SK-N-SH (cell line): ENCODE measurements at regions of chr2 and their contacts with region 1.

Region 1: DNA sequence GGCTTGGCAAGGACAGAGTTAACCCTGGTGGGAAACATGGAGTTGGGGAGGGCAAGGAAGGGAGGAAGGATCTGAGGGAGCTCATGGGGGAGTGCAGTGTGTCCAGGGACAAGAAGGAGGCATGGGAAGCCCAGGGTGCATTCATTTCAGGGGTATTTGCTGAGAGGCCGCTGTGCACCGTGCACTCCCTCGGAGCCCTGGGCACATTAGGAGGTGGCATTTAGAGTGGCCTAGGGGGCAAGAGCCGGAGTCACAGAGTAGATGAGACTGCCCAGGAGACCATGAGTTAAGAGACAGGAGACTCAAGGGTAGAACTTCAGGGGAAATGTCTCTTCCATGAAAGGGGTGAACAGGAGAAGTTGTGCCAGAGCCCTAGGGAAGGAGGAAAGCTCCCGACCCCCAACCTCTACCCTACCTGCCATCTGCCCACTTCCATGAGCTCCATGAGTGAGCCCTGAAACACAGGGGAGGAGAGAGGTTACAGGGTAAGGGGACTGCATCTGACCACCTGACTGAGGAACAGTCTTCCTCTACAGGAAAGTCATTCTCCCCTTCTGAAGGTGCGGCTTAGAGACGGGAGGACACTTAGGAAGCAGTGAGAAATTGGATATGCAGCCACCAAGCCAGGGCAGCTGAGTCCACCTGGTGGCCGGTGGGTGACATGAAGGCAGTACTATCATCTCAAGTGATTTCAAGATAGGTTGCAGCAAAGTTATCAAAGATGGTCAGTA is 58.5 kb upstream of the COPS8 start:
- DNase-seq: peak; percentile 60
- H3K4me3 ChIP-seq: no peak overlapping the region; a peak in 1 of 4 replicates
- H3K27ac ChIP-seq: no peak overlapping the region
- H3K4me1 ChIP-seq: no peaks in the 10 kb centered on the region
- H3K27me3 ChIP-seq: no peaks in the 10 kb centered on the region
- CTCF ChIP-seq: peak; percentile 68
- EP300 ChIP-seq: no peak
- RAD21 ChIP-seq: peak; percentile 83

Region 2: DNA sequence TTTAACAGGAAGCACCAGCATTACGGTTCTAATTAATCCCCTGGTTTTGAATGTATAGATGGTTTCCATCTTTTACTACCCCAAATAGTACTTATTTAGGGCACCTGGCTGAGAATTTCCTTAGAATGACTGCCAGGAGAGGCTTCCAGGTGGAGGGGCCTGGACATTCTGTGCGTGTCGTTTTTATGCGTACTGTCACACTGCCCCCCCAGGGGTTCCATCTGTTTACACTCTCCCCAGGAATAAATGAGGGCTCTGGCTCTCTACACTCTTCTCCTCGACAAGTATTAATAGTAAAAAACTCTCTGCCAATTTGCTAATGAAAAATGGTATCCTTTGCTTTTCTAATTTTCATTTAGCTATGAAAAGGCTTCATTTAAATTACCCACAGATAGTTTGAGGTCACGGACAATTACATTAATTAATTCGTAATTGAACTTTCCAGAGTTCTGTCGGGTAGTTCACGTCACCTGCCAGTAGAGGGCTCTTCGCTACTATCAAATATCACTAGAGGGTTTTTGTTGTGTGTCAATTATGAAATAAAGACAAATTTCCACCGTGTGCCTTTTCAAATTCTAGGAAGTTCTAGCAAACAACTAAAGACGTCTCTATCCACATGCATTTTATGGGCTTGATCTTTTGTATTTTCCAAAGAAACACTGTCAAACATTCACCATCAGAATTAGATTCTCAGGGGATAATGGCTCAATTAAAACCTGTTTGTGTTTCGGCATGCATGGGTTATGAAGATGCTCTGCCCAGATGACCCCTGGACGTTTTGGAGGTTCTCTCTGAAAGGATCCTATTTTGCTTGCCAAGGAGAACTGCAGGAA is 674.2 kb before region 1 on chr2:
- CTCF ChIA-PET with region 1: interaction called, 14 read pairs
- POLR2A ChIA-PET with region 1: no interaction called
- DNase-seq: peak; percentile 58
- H3K4me3 ChIP-seq: peak overlapping the region in 1 of 2 experiments; percentile 14; a peak in 1 of 4 replicates
- H3K27ac ChIP-seq: no peak overlapping the region
- H3K4me1 ChIP-seq: no peaks in the 10 kb centered on the region
- H3K27me3 ChIP-seq: no peaks in the 10 kb centered on the region
- CTCF ChIP-seq: peak; percentile 95
- EP300 ChIP-seq: no peak
- RAD21 ChIP-seq: peak; percentile 78

Region 3: DNA sequence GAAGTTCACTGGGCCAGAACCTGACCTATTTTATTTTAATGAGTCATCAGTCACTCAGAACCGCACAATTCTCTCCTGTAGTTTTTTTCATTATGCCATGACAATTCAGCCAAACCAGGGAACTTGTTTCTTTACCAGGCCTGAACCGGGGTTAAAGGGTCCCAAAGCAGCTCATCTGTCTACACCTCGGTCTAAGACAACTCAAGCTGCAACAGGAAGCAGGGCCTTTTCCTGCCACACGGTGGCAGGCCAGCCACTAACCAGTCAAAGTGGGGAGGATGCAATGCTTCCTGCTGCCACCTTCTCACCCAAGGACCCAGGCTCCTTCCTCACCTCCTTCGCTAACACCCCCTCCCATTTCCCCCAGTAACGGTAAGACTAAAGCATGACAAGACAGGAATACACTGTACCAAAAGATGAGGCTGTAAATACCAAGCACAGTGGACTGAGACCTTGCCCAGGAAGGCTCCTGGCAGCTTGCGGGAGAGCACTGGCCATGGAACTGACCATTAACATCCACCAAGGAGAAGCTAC is 514.2 kb before region 1 on chr2:
- CTCF ChIA-PET with region 1: interaction called, 65 read pairs
- POLR2A ChIA-PET with region 1: no interaction called
- DNase-seq: peak; percentile 72
- H3K4me3 ChIP-seq: no peak overlapping the region; a peak in 1 of 4 replicates
- H3K27ac ChIP-seq: no peak overlapping the region
- H3K4me1 ChIP-seq: no peaks in the 10 kb centered on the region
- H3K27me3 ChIP-seq: no peaks in the 10 kb centered on the region; the same call in 1 of the 2 replicates
- CTCF ChIP-seq: peak; percentile 61
- EP300 ChIP-seq: no peak
- RAD21 ChIP-seq: peak; percentile 66

Region 4: DNA sequence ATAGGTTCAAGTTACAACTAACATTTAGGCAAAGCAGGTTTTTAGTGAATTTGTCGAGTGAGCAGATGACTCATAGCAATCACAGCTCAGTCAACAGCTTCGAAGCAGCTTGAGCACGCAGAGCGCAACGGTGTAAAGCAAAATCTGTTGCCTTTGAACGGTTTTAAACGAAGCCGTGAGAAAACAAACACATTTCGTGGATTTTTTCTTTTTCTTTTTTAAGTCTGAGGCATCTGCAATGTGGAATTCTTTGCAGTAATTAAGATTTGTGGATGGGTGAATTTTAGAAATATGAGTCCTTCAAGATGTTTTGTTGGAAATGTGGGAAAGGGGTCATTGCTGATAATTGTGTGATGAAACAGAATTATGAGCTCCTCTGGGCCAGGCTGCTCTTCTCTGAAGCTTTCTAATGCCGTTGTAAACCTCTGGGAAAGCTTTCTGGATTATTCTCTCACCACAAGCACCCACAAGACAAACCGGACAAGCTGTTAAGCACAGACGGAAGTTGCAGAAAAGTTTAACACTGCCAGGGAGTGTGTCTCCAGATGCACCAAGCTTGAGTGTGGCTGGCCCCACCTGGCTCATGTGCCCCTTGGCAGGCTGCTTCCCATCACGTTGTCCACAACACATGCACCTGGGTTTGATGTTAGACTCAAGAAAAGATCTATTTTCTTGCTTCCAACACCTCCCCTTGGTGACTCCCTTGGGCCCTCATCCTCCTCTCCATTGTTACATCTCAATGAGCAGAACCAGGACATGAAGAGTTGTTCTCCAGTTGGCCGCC is 232.8 kb before region 1 on chr2:
- CTCF ChIA-PET with region 1: no interaction called
- POLR2A ChIA-PET with region 1: no interaction called
- DNase-seq: no peak
- H3K4me3 ChIP-seq: no peak overlapping the region
- H3K27ac ChIP-seq: no peak overlapping the region
- H3K4me1 ChIP-seq: no peaks in the 10 kb centered on the region
- H3K27me3 ChIP-seq: peaks cover 19% of the 10 kb centered on the region; the same call in 1 of the 2 replicates
- CTCF ChIP-seq: no peak
- EP300 ChIP-seq: no peak
- RAD21 ChIP-seq: no peak

Region 5: GRCh38 chr2:237012577-237013267 is 14.4 kb before region 1 on chr2:
- CTCF ChIA-PET with region 1: interaction called, 10 read pairs
- POLR2A ChIA-PET with region 1: no interaction called
- DNase-seq: no peak
- H3K4me3 ChIP-seq: no peak overlapping the region
- H3K27ac ChIP-seq: no peak overlapping the region
- H3K4me1 ChIP-seq: no peaks in the 10 kb centered on the region
- H3K27me3 ChIP-seq: no peaks in the 10 kb centered on the region
- CTCF ChIP-seq: no peak
- EP300 ChIP-seq: no peak
- RAD21 ChIP-seq: no peak

Region 6: DNA sequence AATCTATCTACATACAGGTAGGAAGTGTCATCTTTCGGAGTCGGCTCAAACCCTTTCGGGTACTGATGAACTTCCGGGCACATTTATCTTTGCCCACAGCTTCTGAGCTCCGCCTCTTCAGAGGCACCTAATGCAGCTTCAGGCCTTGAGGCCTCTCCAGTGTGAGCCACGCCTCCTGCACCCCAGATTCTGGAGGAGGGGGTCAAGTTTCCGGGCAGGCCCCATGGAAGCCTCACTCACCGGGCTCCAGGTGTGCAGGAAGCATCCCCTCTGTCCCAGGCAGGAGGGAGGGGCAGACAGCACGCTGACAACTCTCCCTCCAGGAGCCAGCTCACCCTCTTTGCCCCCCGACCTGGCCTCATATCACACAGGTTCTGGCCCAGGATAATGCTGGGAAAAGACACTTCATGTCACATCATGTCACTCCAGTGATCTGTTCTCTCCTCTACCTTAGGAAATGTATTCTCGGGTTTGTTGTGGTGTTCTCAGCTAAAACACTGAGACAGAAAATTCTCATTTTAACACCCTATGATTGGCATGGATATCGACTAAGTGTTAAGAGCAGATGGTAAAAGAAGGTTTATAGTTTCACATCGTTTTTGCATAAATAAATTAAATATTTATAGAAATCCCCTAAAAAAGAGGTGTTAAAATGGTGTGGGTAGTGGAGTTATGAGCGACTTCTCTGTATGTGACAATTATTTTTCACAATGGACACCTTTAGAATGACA is 12.3 kb after region 1 on chr2:
- CTCF ChIA-PET with region 1: interaction called, 15 read pairs
- POLR2A ChIA-PET with region 1: no interaction called
- DNase-seq: no peak
- H3K4me3 ChIP-seq: no peak overlapping the region
- H3K27ac ChIP-seq: no peak overlapping the region
- H3K4me1 ChIP-seq: no peaks in the 10 kb centered on the region
- H3K27me3 ChIP-seq: no peaks in the 10 kb centered on the region
- CTCF ChIP-seq: no peak
- EP300 ChIP-seq: no peak
- RAD21 ChIP-seq: no peak